Naive thymus-derived CD4-positive, alpha-beta T cell (primary cell): ENCODE measurements at regions of chr21 and their contacts with region 1.

Region 1: GRCh38 chr21:33662046-33662445 is 19.7 kb downstream of the ITSN1 start:
- DNase-seq: no peak
- ATAC-seq: no peak
- H3K4me3 ChIP-seq: no peak overlapping the region
- H3K4me3 Mint-ChIP-seq: no peak overlapping the region
- H3K27ac ChIP-seq: no peak overlapping the region
- H3K27ac Mint-ChIP-seq: no peak overlapping the region
- H3K4me1 ChIP-seq: no peaks in the 10 kb centered on the region
- H3K4me1 Mint-ChIP-seq: no peaks in the 10 kb centered on the region
- H3K27me3 ChIP-seq: peaks cover 0 to 1% of the 10 kb centered on the region in 2 donors
- H3K27me3 Mint-ChIP-seq: peaks cover 0 to 10% (median 5%) of the 10 kb centered on the region in 5 donors

Region 2: GRCh38 chr21:33608559-33608958 is 53.5 kb before region 1 on chr21:
- CTCF ChIA-PET with region 1: no interaction called
- POLR2A ChIA-PET with region 1: no interaction called
- intact Hi-C with region 1: loop called in 1 of 2 experiments (anchors 1 kb)
- DNase-seq: no peak
- ATAC-seq: no peak
- H3K4me3 ChIP-seq: no peak overlapping the region
- H3K4me3 Mint-ChIP-seq: no peak overlapping the region
- H3K27ac ChIP-seq: no peak overlapping the region
- H3K27ac Mint-ChIP-seq: peak overlapping the region in 1 of 9 donors; percentile 7
- H3K4me1 ChIP-seq: no peaks in the 10 kb centered on the region
- H3K4me1 Mint-ChIP-seq: peaks cover 0 to 5% (median 4%) of the 10 kb centered on the region in 7 donors
- H3K27me3 ChIP-seq: no peaks in the 10 kb centered on the region
- H3K27me3 Mint-ChIP-seq: no peaks in the 10 kb centered on the region

Region 3: DNA sequence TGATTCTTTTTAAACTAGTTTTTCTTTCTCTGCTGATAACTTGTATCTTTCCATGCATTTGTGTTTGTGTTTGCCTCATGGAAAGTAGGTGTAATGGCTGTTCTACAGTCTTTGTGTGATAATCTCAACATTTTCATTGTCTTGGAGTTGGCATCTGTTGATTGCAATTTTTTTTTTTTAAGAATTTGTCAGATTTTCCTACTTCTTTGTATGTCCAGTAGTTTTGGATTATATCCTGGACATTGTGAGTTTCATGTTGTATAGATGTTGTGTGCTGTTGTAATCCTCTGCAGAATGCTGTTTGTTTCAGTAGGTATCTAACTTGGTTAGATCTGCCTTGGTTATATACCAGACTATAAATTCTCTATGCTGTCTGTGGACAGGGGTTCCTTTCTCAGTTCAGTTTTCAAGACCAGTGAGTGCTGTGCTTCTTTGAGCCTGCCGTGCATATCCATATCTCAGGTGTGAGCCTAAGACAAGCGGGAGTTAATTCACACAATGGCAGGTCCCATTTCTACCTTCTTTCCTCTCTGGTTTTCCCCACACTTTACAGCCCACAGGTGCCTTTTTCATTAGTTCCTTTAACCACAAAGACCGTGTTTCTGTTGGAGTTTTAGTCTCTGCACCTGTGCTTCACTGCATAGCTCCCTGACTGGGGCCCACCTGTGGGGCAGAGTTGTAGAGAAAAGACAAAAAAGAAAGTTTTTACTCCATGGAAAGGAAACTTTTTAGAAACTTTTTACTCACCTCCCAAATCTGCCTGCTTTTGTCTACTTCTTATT is 50.2 kb after region 1 on chr21:
- CTCF ChIA-PET with region 1: no interaction called
- POLR2A ChIA-PET with region 1: no interaction called
- intact Hi-C with region 1: no loop called
- DNase-seq: no peak
- ATAC-seq: no peak
- H3K4me3 ChIP-seq: no peak overlapping the region
- H3K4me3 Mint-ChIP-seq: no peak overlapping the region
- H3K27ac ChIP-seq: no peak overlapping the region
- H3K27ac Mint-ChIP-seq: no peak overlapping the region
- H3K4me1 ChIP-seq: no peaks in the 10 kb centered on the region
- H3K4me1 Mint-ChIP-seq: no peaks in the 10 kb centered on the region
- H3K27me3 ChIP-seq: no peaks in the 10 kb centered on the region
- H3K27me3 Mint-ChIP-seq: peaks cover 0 to 7% (median 0%) of the 10 kb centered on the region in 5 donors